Left ventricle myocardium superior (tissue), 1 donor: ENCODE measurements at regions of chr12 and their contacts with region 1.

Region 1: DNA sequence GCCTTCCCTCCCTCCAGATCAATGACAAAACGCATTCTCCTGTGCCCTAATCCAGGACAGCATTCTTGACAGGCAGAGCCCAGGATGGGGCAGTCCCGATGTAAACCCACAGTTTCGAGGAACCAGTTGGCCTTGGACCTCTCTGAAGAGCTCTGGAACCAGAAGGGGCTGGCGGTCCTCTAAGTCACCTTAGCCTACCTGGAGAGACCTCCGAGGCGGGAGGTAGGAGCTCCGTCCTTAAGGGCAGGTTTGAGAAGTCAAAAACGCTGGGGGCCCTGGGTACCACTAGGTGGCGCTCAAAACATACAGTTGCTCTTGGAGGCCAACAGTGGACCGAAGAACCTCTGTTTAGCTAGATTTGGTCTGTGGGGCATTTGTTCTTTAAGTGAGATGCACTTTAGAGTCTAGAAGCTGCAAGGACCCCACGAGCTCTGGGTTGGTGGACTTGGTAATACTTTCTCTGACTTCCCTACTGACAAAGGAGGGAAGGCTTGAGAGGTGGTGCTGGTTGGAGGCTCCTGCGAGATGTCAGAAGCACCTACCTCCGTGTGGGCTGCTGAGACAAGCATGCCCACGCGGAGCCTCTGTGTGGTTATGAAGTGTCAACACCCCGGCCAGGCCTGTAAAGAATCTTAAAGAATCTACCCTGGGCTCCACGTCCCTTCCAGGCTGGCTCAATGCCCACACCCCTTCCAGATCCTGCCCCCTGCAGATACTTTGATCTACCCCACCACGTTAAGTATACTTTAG is 74.8 kb upstream of the CHST11 start:
- DNase-seq: peak; percentile 81
- ATAC-seq: peak; percentile 89

Region 2: DNA sequence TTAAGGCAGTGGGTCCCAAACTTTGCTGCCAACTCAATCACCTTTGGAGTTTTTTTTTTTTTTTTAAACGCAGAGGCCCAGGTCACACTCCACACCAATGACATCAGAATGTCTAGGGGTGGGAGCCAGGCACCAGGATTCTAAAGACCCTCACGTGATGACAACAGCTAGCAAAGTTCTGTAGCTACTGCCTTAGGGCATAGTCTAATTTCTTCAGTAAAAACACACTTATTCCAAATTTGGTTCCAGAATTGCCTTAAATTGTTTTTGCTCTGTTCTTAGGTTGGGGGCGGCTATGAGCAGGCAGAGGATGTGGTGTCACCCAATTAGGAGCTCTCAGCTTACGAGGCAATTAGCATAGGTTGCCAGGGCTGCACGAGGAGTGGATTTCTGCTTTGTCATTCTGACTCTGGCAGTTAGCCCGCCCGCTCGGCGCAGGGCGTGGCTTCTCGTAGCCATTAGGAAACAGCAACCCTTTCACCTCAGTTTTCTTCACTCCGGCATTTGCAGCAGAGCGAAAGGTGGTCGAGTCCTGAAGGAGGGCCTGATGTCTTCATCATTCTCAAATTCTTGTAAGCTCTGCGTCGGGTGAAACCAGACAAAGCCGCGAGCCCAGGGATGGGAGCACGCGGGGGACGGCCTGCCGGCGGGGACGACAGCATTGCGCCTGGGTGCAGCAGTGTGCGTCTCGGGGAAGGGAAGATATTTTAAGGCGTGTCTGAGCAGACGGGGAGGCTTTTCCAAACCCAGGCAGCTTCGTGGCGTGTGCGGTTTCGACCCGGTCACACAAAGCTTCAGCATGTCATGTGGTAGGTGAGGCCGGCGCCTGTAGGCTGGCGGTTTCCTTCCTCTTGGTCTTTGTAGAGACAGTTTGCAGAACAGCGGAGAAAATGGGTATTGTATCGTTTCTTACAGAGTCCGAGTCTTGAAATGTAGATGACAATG is 95.1 kb before region 1 on chr12:
- intact Hi-C with region 1: no loop called
- DNase-seq: peak; percentile 95
- ATAC-seq: peak; percentile 91

Region 3: DNA sequence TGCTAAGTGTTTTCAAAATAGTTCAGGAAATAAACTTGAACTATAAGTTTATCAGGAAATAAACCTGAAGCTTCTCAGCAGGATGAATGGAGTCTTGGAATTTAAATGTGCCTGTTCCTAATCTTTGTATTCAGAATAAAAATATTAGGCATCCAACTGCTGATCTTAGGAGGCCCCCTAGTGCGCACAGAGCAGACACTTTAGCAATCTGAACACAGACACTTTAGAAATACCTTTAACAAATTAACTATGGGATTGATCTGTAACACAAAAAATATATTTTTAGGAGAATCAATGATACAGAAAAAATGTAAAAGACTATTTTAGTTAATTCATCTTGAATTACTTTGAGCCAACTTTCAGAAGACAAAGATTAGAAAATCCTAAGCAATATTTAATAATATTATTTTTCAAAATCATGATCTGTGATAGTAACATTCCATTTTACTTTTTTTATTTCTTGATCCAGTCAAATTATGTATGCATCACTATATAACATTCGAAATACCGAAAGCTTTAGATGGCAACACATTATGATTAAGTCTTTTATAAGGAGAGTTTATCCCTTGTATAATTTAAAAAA is 495.3 kb after region 1 on chr12:
- intact Hi-C with region 1: loop called (anchors 5 kb)
- DNase-seq: peak; percentile 47
- ATAC-seq: peak; percentile 77

Region 4: GRCh38 chr12:105053116-105053572 is 671.2 kb after region 1 on chr12:
- intact Hi-C with region 1: loop called (anchors 5 kb)
- DNase-seq: peak; percentile 64
- ATAC-seq: peak; percentile 61